ENCODE measurements at regions of chr3 and their contacts with region 1.

Region 1: GRCh38 chr3:49428697-49429100 is 425 bp downstream of the NICN1 start:
- DNase-seq: no peak

Region 2: DNA sequence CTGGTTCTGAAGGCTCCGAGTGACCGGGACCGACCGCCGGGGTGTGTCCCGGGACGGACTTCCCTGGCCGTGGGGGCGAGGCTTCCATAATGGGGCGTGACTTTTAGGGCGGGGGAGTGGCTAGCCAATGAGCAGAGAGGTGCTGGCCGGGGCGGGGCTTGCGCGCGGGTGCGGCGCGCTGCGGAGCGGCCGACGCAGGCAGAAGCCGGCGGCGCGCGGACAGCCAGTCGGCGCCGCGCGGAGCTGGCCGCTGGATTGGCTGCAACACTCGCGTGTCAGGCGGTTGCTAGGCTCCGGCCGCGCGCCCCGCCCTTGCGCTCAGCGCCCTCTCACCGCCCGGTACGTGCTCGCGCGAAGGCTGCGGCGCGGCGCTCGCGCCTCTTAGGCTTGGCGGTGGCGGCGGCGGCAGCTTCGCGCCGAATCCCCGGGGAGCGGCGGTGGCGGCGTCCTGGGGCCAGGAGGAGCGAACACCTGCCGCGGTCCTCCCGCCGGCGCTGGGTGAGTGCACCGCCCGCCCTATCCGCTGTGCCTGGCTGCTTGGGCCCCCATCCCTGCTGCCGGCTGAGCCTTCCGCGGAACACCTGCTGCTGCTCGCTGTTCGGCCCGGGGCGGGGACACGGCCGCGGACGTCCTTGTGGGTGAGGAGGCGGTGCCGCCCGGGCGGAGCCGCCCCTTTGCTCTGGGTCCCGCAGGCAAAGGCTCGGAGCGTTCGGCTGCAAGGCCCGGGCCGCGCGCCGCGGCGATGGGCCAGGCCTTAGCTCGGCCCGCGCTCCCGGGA is 41.4 kb after region 1 on chr3 and contains the start of gene DAG1:
- CTCF ChIA-PET with region 1: no interaction called
- POLR2A ChIA-PET with region 1: interaction called, 12 read pairs
- DNase-seq: peak; percentile 98